ENCODE measurements at regions of chr5 and their contacts with region 1.

Region 1: GRCh38 chr5:72523960-72524582 is 16.9 kb upstream of the ZNF366 start:
- DNase-seq: no peak
- H3K4me3 ChIP-seq: no peak overlapping the region
- H3K27ac ChIP-seq: no peak overlapping the region
- H3K4me1 ChIP-seq: no peaks in the 10 kb centered on the region
- H3K27me3 ChIP-seq: no peaks in the 10 kb centered on the region
- CTCF ChIP-seq: peak; percentile 25 to 54 (median 45)
- POLR2A ChIP-seq: no peak

Region 2: GRCh38 chr5:72366324-72366976 is 157.6 kb before region 1 on chr5:
- intact Hi-C with region 1: loop called (anchors 10 kb)
- DNase-seq: peak in 1 of 2 donors; percentile 67
- H3K4me3 ChIP-seq: no peak overlapping the region
- H3K27ac ChIP-seq: no peak overlapping the region
- H3K4me1 ChIP-seq: no peaks in the 10 kb centered on the region
- H3K27me3 ChIP-seq: no peaks in the 10 kb centered on the region
- CTCF ChIP-seq: peak; percentile 68 to 91 (median 83)
- POLR2A ChIP-seq: no peak

Region 3: GRCh38 chr5:72402959-72403628 is 121.0 kb before region 1 on chr5:
- intact Hi-C with region 1: no loop called
- DNase-seq: no peak
- H3K4me3 ChIP-seq: no peak overlapping the region
- H3K27ac ChIP-seq: peak overlapping the region; percentile 53 to 75
- H3K4me1 ChIP-seq: no peaks in the 10 kb centered on the region
- H3K27me3 ChIP-seq: no peaks in the 10 kb centered on the region
- CTCF ChIP-seq: peak in 1 of 3 donors; percentile 11
- POLR2A ChIP-seq: no peak

Measured in breast epithelium (tissue), 4 donors.